ENCODE measurements at regions of chr18 and their contacts with region 1.

Region 1: DNA sequence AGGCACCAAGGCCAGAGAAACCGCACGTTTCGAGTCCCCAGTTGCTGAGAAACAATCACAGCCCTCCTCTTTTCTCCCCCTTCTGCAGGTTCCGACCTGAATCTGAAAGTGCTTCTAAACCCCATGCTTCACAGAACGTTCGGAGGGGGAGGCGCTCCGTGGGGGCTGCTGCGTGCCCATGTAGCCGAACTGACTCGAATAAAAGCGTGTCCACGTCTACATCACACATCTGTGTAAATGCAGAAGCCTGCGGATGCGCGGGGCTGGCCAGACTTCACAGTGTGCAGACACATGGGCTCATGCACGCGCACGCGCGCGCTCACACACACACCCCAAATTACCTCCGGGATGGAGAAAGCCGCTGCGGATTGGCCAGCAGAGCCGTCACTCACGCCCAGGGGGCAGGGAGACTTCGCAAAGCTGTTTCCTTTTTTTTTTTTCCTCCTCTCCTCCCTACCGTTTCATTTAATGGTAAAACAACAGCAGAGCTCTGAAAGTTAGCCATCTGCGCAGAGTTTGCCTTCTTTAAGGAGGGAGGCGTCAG is 2.3 kb downstream of the ZNF516 start:
- DNase-seq: peak; percentile 99
- ATAC-seq: peak; percentile 57
- H3K4me3 ChIP-seq: peak overlapping the region; percentile 81
- H3K27ac ChIP-seq: peak overlapping the region; percentile 78
- H3K4me1 ChIP-seq: peaks cover 11% of the 10 kb centered on the region
- H3K27me3 ChIP-seq: no peaks in the 10 kb centered on the region
- CTCF ChIP-seq: no peak
- POLR2A ChIP-seq: no peak
- RAD21 ChIP-seq: no peak

Region 2: DNA sequence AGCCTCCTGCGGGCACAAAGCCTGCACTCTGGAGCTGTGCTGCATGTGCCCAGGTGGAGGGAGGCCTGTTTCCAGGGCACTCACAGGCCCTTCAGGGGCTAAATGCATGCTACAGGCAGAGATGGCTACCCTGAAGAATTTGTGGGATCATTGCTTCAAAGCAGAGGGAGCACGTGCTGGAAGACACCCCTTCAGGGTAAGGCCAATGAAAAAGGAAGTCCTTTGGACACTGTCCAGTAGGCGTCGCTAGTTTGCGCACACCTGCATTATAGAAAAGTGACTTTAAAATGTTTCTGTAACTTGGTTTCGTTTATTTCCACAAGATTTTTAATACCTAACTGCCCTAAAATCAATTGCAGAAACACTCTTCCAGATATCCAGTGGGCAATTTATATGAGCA is 323.0 kb before region 1 on chr18:
- CTCF ChIA-PET with region 1: no interaction called
- POLR2A ChIA-PET with region 1: no interaction called
- dilution Hi-C with region 1: no loop called
- in situ Hi-C with region 1: no loop called
- intact Hi-C with region 1: no loop called
- DNase-seq: no peak
- ATAC-seq: no peak
- H3K4me3 ChIP-seq: no peak overlapping the region
- H3K27ac ChIP-seq: no peak overlapping the region
- H3K4me1 ChIP-seq: no peaks in the 10 kb centered on the region
- H3K27me3 ChIP-seq: no peaks in the 10 kb centered on the region
- CTCF ChIP-seq: no peak
- POLR2A ChIP-seq: no peak
- RAD21 ChIP-seq: no peak

Region 3: DNA sequence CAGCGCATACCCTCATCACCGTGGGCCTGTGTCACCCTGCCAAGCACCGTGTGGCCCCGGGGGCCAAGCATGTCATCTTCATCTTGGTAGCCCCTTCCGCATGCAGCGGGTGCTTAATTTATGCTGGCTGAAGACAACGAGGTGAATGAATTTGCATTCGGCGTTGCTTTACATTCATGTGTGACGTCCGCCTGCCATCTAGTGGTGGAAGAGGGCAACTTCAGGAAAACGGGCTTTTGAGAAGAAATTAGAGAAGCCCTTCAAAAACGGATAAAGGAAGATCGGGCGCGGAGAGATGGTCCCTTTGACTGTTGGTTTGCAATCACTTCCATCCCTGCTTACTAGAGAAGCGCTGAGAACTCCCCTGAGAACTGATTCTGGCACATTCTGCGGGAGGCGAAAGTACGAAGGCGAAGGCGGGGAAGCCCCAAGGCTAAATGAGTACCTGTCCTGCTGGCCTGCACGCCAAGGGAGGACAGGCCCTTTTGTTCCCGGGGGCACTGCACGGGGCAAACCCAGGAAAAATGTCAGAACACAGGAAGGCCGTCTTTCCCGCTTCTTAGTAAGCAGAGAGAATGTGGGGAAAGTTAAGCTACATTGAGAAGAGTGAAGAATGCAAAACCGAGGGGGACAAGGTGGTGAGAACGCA is 143.6 kb before region 1 on chr18:
- CTCF ChIA-PET with region 1: no interaction called
- POLR2A ChIA-PET with region 1: no interaction called
- dilution Hi-C with region 1: no loop called
- in situ Hi-C with region 1: no loop called
- intact Hi-C with region 1: no loop called
- DNase-seq: peak; percentile 67
- ATAC-seq: peak; percentile 40
- H3K4me3 ChIP-seq: no peak overlapping the region
- H3K27ac ChIP-seq: no peak overlapping the region
- H3K4me1 ChIP-seq: peaks cover under 1% of the 10 kb centered on the region; the same call in 1 of the 2 replicates
- H3K27me3 ChIP-seq: no peaks in the 10 kb centered on the region
- CTCF ChIP-seq: peak; percentile 88
- POLR2A ChIP-seq: no peak
- RAD21 ChIP-seq: peak; percentile 89

Region 4: DNA sequence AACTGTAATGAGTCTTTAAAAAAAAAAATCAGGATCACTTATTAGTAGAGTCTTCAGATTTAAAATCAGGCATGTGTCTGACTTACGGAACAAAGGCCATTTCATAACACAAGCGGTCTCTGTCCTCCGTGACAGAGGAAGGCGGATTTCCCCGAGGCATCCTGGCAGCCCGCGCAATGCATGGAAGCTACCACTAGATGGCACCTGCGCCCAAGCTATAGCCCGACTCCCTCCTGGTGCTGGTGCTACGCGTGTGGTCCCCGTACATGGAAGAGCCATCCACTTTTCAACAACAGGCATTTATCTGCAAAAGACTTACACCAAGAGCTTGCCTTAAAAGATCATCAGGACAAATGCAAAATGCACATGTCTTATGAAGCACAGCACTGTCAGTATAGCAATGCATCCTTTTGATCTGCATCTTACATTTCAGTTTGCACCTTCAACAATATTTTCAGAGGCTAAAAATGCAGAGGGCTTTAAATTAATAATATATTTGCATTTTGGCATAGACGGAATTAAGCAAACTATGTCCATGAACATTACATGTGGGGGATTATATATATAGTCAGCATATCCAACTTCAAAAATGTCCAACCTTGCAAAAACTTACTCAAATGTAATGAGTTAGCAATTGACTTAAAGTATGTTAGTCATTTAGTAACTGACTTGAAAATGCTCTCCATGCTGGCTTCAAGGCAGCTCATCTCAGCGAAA is 93.7 kb before region 1 on chr18:
- CTCF ChIA-PET with region 1: interaction called, 6 read pairs
- POLR2A ChIA-PET with region 1: no interaction called
- dilution Hi-C with region 1: no loop called
- in situ Hi-C with region 1: no loop called
- intact Hi-C with region 1: loop called (anchors 1 kb)
- DNase-seq: peak; percentile 77
- ATAC-seq: peak; percentile 87
- H3K4me3 ChIP-seq: no peak overlapping the region
- H3K27ac ChIP-seq: no peak overlapping the region
- H3K4me1 ChIP-seq: peaks cover 6% of the 10 kb centered on the region
- H3K27me3 ChIP-seq: no peaks in the 10 kb centered on the region
- CTCF ChIP-seq: peak; percentile 96
- POLR2A ChIP-seq: 0 out of 2 replicates have a peak, but pooled peaks have one; percentile 32
- RAD21 ChIP-seq: peak; percentile 99

Region 5: DNA sequence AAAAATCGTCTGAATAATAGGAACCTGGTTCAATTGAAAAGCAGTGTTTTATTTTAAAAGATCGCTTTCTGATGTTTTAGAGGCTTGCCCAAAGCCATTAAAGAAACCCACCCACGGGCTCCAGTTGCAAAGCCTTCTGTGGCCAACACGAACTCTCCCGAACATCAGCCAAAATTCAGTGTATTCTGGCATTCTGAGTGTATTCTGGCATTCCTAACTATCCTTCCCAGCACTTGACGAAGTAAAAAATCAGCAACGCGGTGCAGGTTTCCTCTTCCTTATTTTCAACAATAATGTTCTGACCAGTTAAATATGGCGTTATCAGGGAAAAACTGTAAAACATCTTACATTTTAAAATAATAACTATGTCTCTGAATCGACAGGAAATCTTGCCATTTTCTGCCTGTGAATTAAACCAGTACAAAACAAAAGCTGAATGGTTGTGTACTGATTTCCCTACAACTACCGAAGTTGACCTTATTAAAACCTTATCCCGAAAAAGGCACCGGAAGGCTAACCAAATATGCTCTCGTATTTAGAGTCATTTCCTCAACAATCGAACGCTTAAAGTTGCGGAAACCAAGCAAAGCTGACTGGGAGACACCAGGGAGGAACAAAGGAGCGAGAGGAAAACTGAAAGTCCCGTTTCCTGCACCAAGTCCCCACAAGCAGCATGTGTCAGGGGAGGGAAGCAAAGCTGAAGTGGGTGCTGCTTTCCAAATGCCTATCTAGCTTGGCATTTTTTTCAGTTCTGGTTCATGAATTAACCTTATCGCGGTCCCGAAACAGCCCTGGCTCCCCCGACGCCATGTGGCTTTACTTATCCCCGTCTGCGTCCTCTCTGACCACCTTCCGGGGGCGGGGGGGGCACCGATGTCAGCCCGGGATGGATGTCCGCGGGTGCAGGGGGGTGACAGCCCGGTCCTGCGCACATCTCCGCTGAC is 42.0 kb before region 1 on chr18:
- CTCF ChIA-PET with region 1: no interaction called
- POLR2A ChIA-PET with region 1: no interaction called
- dilution Hi-C with region 1: no loop called
- in situ Hi-C with region 1: no loop called
- intact Hi-C with region 1: loop called (anchors 2 kb)
- DNase-seq: peak; percentile 72
- ATAC-seq: peak; percentile 61
- H3K4me3 ChIP-seq: peak overlapping the region; percentile 49
- H3K27ac ChIP-seq: peak overlapping the region; percentile 83
- H3K4me1 ChIP-seq: peaks cover 43% of the 10 kb centered on the region
- H3K27me3 ChIP-seq: no peaks in the 10 kb centered on the region
- CTCF ChIP-seq: no peak
- POLR2A ChIP-seq: peak; percentile 66
- RAD21 ChIP-seq: no peak

Region 6: GRCh38 chr18:76553715-76554546 is 61.2 kb after region 1 on chr18:
- CTCF ChIA-PET with region 1: no interaction called
- POLR2A ChIA-PET with region 1: no interaction called
- dilution Hi-C with region 1: no loop called
- in situ Hi-C with region 1: no loop called
- intact Hi-C with region 1: no loop called
- DNase-seq: peak; percentile 90
- ATAC-seq: peak; percentile 90
- H3K4me3 ChIP-seq: no peak overlapping the region
- H3K27ac ChIP-seq: peak overlapping the region; percentile 80
- H3K4me1 ChIP-seq: peaks cover 9% of the 10 kb centered on the region
- H3K27me3 ChIP-seq: no peaks in the 10 kb centered on the region
- CTCF ChIP-seq: no peak
- POLR2A ChIP-seq: no peak
- RAD21 ChIP-seq: no peak

Region 7: GRCh38 chr18:76620321-76621170 is 127.8 kb after region 1 on chr18:
- CTCF ChIA-PET with region 1: interaction called, 6 read pairs
- POLR2A ChIA-PET with region 1: no interaction called
- dilution Hi-C with region 1: no loop called
- in situ Hi-C with region 1: no loop called
- intact Hi-C with region 1: loop called (anchors 1 kb)
- DNase-seq: peak; percentile 77
- ATAC-seq: peak; percentile 88
- H3K4me3 ChIP-seq: peak overlapping the region; percentile 15; the same call in 1 of the 2 replicates
- H3K27ac ChIP-seq: peak overlapping the region; percentile 55
- H3K4me1 ChIP-seq: peaks cover 19% of the 10 kb centered on the region
- H3K27me3 ChIP-seq: no peaks in the 10 kb centered on the region
- CTCF ChIP-seq: peak; percentile 66
- POLR2A ChIP-seq: no peak
- RAD21 ChIP-seq: peak; percentile 62

Region 8: GRCh38 chr18:76709659-76710645 is 217.2 kb after region 1 on chr18:
- CTCF ChIA-PET with region 1: no interaction called
- POLR2A ChIA-PET with region 1: no interaction called
- dilution Hi-C with region 1: no loop called
- in situ Hi-C with region 1: no loop called
- intact Hi-C with region 1: loop called (anchors 2 kb)
- DNase-seq: peak; percentile 65
- ATAC-seq: peak; percentile 99
- H3K4me3 ChIP-seq: no peak overlapping the region
- H3K27ac ChIP-seq: no peak overlapping the region
- H3K4me1 ChIP-seq: no peaks in the 10 kb centered on the region
- H3K27me3 ChIP-seq: no peaks in the 10 kb centered on the region; the same call in 1 of the 2 replicates
- CTCF ChIP-seq: peak; percentile 97
- POLR2A ChIP-seq: peak; percentile 43; the same call in 1 of the 2 replicates
- RAD21 ChIP-seq: peak; percentile 98